Heart left ventricle (tissue), 16 donors: ENCODE measurements at regions of chr10 and their contacts with region 1.

Region 1: DNA sequence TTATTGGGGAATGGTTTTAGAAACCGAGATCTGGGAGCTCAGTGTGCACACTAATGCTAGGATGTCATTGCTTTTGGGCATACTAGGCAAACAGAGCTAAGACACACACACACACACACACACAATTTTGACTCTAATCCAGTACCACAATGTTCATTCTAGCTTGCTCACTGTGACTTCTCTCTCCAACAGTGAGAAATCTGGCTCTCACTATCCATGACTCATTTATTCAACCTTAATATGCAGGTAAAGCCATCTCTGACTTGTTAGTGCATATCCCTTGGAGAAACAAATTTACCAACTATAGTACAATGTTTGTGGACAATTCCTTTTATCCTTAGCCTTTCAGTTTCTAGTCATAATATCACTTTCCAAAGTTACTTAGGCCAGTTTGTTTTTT is 5.9 kb upstream of the BMS1 start:
- DNase-seq: no peak
- ATAC-seq: no peak
- H3K4me3 ChIP-seq: no peak overlapping the region
- H3K27ac ChIP-seq: no peak overlapping the region
- H3K4me1 ChIP-seq: peaks cover 0 to 2% (median under 1%) of the 10 kb centered on the region in 12 donors
- H3K27me3 ChIP-seq: peaks cover 0 to 29% (median 0%) of the 10 kb centered on the region in 9 donors
- CTCF ChIP-seq: no peak
- POLR2A ChIP-seq: no peak

Region 2: DNA sequence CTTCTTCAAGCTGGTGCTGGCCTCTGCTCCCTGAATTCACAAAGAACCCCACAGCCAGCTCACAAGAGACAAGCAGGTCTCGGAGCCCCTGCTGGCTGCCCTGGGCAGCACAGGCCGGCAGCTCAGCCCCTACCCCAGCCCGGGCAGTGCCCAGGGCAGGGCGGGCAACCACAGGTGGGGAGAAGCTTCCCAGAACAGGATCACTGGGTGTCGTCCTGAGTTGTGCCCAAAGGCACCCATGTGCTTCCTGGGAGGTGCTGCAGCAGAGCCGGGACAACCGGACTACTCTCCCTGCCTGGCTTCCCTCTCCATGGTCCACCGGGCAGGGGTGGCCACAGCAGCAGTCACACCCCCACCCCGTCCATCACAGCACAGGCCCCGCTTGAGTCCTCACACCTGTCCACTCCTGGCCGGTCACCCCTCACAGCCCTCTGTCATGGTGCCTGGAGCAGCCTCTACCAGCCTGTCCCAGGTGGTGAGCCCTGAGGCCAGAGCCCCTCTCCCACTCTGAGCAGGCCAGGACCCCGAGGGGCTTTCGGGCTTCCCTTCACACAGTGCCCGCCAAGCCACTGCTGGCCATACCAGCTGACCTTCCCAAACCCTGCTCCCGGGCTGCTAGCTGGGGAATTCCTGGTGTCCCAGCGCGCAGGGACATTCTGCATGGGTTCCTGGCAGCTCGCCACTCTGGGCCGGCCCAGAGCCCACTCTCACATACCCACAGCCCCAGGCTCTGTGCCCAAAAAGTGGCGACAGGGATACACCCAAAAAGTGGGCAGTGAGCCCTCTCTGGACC is 487.1 kb after region 1 on chr10:
- intact Hi-C with region 1: loop called in 1 of 10 experiments (anchors 5 kb)
- DNase-seq: peak in 1 of 5 donors; percentile 57
- ATAC-seq: no peak
- H3K4me3 ChIP-seq: no peak overlapping the region
- H3K27ac ChIP-seq: no peak overlapping the region
- H3K4me1 ChIP-seq: peaks cover 0 to 29% (median 6%) of the 10 kb centered on the region in 12 donors
- H3K27me3 ChIP-seq: peaks cover 6 to 59% (median 29%) of the 10 kb centered on the region in 9 donors
- CTCF ChIP-seq: no peak
- POLR2A ChIP-seq: no peak

Region 3: DNA sequence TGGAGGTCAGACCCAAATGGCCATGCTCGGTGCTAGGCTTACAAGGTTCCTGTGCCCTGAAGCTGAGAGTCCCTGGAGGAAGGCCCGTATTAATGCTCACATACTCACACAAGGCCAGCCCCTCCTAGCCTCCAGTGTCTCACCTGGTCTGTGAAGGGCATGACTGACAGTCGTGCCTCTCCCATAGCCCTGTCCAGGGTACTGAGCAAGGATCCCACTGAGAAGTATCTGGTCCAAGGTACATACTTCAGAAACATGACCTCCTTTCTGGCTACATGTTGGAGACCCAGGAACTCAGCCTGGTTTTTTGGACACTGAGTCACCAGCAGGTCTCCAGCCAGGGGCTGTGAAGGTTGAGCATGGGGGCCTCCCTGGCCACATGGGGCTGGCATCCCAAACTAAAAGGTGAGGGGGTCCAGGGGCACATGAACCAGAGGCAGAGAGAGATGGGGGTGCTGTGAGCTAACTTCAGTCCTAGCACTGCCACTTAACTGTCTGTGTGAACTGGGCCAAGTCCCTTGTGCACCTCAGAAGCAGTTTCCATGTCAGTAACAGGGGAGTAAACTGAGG is 507.7 kb after region 1 on chr10:
- intact Hi-C with region 1: no loop called
- DNase-seq: no peak
- ATAC-seq: no peak
- H3K4me3 ChIP-seq: no peak overlapping the region
- H3K27ac ChIP-seq: no peak overlapping the region
- H3K4me1 ChIP-seq: peaks cover 0 to 19% (median 0%) of the 10 kb centered on the region in 12 donors
- H3K27me3 ChIP-seq: peaks cover 0 to 49% (median 18%) of the 10 kb centered on the region in 9 donors
- CTCF ChIP-seq: no peak
- POLR2A ChIP-seq: no peak